A549 (cell line): ENCODE measurements at regions of chr5 and their contacts with region 1.

Region 1: DNA sequence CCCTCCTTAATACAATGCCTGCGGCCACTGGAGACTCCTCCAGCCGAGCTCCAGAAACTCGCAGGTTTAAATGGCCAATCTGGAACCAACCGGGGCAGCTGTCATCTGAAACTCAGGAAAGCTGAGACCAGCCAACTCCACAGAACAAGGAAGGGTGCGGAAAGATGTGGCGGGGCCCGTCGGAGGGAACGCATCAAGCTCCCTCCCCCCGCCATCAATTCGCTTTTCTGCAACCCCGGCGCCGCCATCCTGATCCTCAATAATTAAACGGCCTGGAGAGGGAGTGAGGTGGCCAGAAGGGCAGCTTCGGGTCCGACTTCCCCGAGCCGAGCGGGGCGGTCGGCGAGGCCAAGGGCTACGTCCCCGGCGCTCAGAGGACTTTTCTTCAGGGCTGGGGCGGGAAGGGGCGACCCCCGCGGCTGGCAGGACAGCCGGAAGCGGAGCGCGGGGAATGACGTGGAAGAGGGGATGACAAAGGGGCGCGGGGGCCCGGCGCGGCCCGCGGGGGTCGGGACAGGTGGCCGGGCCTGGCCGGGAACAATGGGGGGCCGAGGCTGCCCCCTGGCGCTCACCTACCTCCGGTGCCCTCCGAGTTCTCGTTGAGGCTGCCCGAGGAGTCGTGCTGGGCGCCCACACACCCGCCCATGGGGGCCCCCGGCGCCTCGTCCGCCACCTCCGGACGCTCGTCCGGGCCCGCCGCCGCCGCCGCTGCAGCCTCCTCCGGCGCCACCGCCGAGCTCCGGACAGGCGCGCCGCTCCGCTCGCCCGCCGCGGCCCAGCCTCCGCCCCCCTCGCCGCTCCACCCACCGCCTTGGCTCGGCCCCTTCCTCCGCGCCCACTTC is at the start of gene UBTD2:
- DNase-seq: peak; percentile 81 to 87
- ATAC-seq: peak; percentile 81 to 90
- H3K4me3 ChIP-seq: peak within 1 kb of the TSS; percentile 57
- H3K27ac ChIP-seq: peak within 1 kb of the TSS; percentile 95 to 98
- H3K4me1 ChIP-seq: peaks cover 24% of the 10 kb centered on the region
- CTCF ChIP-seq: peak; percentile 68
- EP300 ChIP-seq: no peak
- POLR2A ChIP-seq: no peak; the same call in 1 of the 2 replicates
- RAD21 ChIP-seq: peak; percentile 29 to 74; a peak in 4 of 5 replicates
- polyA plus RNA-seq, gene UBTD2: 20.9 and 22.8 TPM in 2 replicates

Region 2: GRCh38 chr5:172266676-172267092 is 16.6 kb before region 1 on chr5:
- CTCF ChIA-PET with region 1: interaction called, 26 read pairs
- POLR2A ChIA-PET with region 1: interaction called, 3 read pairs
- DNase-seq: no peak
- ATAC-seq: no peak
- H3K4me3 ChIP-seq: no peak overlapping the region
- H3K27ac ChIP-seq: no peak overlapping the region
- H3K4me1 ChIP-seq: no peaks in the 10 kb centered on the region
- CTCF ChIP-seq: no peak
- EP300 ChIP-seq: no peak
- POLR2A ChIP-seq: no peak
- RAD21 ChIP-seq: no peak

Region 3: GRCh38 chr5:172556971-172557461 is 273.8 kb after region 1 on chr5:
- CTCF ChIA-PET with region 1: no interaction called
- POLR2A ChIA-PET with region 1: no interaction called
- DNase-seq: no peak
- ATAC-seq: peak in 1 of 2 experiments; percentile 23; a peak in 2 of 6 replicates
- H3K4me3 ChIP-seq: no peak overlapping the region
- H3K27ac ChIP-seq: no peak overlapping the region
- H3K4me1 ChIP-seq: 0 out of 3 replicates have a peak, but pooled peaks cover 3% of the 10 kb centered on the region
- CTCF ChIP-seq: no peak
- EP300 ChIP-seq: no peak
- POLR2A ChIP-seq: no peak
- RAD21 ChIP-seq: no peak